Testis (tissue), 5 donors: ENCODE measurements at regions of chr2 and their contacts with region 1.

Region 1: DNA sequence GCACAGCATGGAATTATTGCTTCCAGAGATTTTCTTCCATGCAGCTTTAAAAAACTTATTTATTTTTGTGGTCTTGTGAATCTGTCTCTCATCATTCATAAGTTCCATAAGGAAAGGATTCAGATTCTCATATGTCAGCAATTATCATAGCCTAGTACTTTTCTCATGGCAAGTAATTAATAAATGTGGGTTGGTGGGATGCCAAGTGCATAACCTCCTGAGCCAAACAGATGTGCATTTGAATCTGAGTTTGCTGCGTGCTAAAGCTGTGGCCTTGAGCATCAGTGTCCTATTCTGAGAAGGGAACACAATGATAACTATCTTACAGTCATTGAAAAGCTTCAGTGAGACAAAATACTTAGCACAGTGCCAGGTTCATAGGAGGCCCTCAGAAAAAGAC is 331.9 kb downstream of the PDE11A start:
- DNase-seq: peak; percentile 64
- H3K4me3 ChIP-seq: no peak overlapping the region
- H3K27ac ChIP-seq: peak overlapping the region; percentile 39 to 50
- H3K4me1 ChIP-seq: peaks cover 19% of the 10 kb centered on the region
- H3K27me3 ChIP-seq: no peaks in the 10 kb centered on the region
- CTCF ChIP-seq: no peak
- POLR2A ChIP-seq: no peak

Region 2: GRCh38 chr2:177332041-177332991 is 408.4 kb before region 1 on chr2:
- intact Hi-C with region 1: loop called (anchors 10 kb)
- DNase-seq: peak; percentile 63
- H3K4me3 ChIP-seq: no peak overlapping the region
- H3K27ac ChIP-seq: peak overlapping the region; percentile 62 to 75
- H3K4me1 ChIP-seq: peaks cover 16% of the 10 kb centered on the region
- H3K27me3 ChIP-seq: no peaks in the 10 kb centered on the region
- CTCF ChIP-seq: peak; percentile 55 to 77 (median 61)
- POLR2A ChIP-seq: no peak